Mammary epithelial cell (primary cell): ENCODE measurements at regions of chr11 and their contacts with region 1.

Region 1: DNA sequence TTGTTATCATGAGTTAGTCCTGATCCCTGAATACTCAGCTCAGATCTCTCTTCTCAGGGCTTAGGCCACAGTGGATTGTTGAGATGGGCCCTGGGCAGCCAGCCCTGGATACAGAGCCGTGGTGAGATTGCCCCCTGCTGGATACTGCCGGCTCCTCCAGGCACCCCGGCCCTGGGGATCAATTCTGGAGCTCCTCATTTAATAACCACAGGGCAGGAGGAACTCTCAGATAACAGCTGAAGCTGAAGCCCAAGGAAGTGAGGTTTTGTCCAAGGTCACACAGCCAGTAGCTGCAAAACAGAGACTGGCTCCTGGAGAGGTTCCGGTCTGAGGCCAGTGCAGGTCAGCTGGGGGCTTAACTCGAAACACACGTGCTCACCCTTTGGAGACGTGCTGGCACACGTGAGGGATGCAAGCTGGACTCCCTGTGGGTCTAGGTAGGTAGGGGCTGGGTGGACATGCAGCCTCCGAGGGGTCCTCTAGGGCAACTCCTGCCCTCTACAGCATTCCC is 16.0 kb downstream of the USH1C start:
- DNase-seq: peak; percentile 24
- H3K4me3 ChIP-seq: no peak overlapping the region
- H3K27ac ChIP-seq: no peak overlapping the region
- H3K4me1 ChIP-seq: no peaks in the 10 kb centered on the region
- H3K27me3 ChIP-seq: no peaks in the 10 kb centered on the region
- CTCF ChIP-seq: peak; percentile 69 to 84

Region 2: DNA sequence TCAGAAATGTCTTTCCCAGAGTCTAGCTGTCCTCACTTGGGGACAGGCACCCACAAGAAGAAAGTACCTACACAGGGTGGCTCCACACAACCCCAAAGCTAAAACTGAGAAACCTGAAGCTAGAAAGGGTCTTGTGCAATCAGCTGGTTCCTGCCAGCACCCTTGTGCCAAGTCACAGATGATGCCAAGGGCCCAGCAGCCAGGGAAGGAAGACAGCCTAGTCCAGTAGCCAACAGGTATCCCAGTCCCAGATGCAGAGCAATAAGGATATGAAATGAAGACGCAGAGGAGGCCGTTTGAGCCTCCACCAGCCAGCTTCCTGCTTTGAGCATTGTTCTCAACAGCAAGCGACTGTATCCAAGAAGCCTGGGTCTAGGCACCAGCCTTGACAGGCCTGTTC is 520.1 kb before region 1 on chr11:
- CTCF ChIA-PET with region 1: interaction called, 15 read pairs
- dilution Hi-C with region 1: no loop called
- in situ Hi-C with region 1: no loop called
- intact Hi-C with region 1: no loop called
- DNase-seq: no peak
- H3K4me3 ChIP-seq: no peak overlapping the region
- H3K27ac ChIP-seq: no peak overlapping the region
- H3K4me1 ChIP-seq: peaks cover 3% of the 10 kb centered on the region
- H3K27me3 ChIP-seq: peaks cover under 1% of the 10 kb centered on the region
- CTCF ChIP-seq: no peak

Region 3: DNA sequence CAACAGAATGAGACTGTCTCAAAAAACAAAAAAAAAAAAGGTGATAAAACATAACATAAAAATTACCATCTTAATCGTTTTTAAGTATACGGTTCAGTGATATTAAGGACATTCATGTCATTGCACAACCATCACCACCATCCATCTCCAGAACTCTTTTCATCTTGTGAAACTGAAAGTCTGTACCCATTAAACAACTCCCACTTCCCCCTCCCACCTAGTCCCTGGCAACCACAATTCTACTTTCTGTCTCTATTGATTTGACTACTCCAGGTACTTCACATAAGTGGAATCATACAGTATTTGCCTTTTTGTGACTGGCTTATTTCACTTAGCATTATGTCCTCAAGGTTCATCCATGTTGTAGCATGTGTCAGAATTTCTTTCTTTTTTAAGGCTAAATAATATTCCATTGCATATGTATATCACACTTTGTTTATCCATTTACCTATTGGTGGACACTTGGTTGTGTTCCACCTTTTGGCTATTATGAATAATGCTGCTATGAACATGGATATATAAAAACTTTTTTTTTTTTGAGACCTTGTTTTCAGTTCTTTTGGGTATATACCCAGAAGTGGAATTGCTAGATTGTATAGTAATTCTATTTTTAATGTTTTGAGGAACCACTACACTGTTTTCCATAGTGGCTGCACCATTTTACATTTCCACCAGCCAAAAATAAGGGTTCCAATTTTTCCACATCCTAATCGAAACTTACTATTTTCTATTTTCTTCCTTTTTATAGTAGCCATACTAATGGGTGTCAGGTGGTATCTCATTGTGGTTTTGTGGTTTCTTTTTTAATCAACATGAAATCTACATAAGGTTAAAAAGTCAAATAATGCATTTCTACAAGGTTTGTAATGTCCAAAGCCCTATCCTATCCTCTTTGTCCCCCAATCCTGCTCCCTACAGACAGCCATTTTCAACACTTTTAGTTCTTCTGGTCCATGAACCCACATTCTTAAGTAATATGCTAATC is 297.1 kb before region 1 on chr11:
- CTCF ChIA-PET with region 1: interaction called, 4 read pairs
- dilution Hi-C with region 1: no loop called
- in situ Hi-C with region 1: loop called in 1 of 2 experiments (anchors 10 kb)
- intact Hi-C with region 1: loop called (anchors 1 kb)
- DNase-seq: no peak
- H3K4me3 ChIP-seq: no peak overlapping the region
- H3K27ac ChIP-seq: no peak overlapping the region
- H3K4me1 ChIP-seq: no peaks in the 10 kb centered on the region
- H3K27me3 ChIP-seq: no peaks in the 10 kb centered on the region
- CTCF ChIP-seq: no peak

Region 4: DNA sequence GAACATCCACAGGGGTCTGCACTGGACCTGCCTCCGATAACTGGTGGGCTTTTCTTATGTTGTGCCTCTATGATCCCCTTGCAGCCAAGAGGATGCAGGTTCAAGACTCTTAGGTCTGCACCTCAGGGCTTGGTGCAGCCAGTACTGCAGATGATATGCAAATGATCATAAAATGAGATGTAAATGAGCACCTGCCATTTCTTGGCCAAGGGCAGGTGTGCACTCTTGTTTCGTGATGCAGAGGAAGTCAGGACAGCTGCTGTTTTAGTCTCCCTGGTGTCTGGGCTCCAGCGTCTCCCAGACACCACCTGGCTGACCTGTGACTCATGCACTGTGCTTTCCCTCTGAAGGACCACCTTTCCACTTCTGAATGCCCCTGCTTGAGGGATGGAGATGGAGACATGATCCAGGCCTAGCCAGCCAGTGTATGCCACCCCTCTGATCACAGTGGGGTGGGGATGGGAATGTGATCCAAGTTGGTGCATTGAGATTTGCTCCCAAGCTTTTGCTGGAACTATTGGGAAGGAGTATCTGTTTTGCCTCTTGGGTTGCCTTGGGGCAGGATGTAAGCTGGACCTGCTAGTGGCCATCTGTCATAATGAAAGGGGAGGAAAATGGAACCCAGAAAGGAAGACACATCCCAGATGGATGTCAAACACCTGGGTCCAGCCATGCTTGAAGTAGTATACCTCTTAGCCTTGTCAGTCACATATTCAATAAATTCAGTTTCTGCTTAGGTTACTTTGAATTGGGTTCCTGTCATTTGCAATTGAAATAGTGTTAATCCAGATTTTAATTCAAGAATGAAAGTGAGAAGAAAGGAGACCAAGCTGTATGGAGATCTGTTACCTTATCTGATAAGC is 136.5 kb before region 1 on chr11:
- CTCF ChIA-PET with region 1: interaction called, 4 read pairs
- dilution Hi-C with region 1: no loop called
- in situ Hi-C with region 1: loop called in 1 of 2 experiments (anchors 10 kb)
- intact Hi-C with region 1: no loop called
- DNase-seq: no peak
- H3K4me3 ChIP-seq: no peak overlapping the region
- H3K27ac ChIP-seq: no peak overlapping the region
- H3K4me1 ChIP-seq: no peaks in the 10 kb centered on the region
- H3K27me3 ChIP-seq: no peaks in the 10 kb centered on the region
- CTCF ChIP-seq: no peak

Region 5: DNA sequence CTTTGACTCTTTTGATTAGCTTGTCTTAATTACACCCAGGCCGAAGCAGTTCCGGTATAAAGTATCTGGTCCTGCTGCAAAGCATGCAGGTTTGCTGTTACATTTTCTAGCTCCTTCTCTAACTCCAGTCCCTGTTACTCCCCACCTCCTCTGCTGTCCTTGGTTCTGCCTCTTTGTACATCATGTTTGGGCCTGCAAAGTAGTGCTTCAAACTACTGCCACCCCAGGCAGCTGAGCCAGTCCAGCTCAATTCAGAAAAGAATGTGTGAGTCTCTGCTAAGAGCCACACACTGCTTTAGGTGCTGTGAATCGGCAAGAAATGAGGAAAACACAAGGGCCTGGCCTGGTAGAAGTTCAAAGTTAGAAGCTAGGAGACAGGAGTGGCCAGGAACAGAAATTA is 348.6 kb after region 1 on chr11:
- CTCF ChIA-PET with region 1: no interaction called
- dilution Hi-C with region 1: no loop called
- in situ Hi-C with region 1: no loop called
- intact Hi-C with region 1: no loop called
- DNase-seq: peak; percentile 25
- H3K4me3 ChIP-seq: no peak overlapping the region
- H3K27ac ChIP-seq: no peak overlapping the region
- H3K4me1 ChIP-seq: no peaks in the 10 kb centered on the region
- H3K27me3 ChIP-seq: no peaks in the 10 kb centered on the region
- CTCF ChIP-seq: no peak